K562 (cell line): ENCODE measurements at regions of chr19 and their contacts with region 1.

Region 1: DNA sequence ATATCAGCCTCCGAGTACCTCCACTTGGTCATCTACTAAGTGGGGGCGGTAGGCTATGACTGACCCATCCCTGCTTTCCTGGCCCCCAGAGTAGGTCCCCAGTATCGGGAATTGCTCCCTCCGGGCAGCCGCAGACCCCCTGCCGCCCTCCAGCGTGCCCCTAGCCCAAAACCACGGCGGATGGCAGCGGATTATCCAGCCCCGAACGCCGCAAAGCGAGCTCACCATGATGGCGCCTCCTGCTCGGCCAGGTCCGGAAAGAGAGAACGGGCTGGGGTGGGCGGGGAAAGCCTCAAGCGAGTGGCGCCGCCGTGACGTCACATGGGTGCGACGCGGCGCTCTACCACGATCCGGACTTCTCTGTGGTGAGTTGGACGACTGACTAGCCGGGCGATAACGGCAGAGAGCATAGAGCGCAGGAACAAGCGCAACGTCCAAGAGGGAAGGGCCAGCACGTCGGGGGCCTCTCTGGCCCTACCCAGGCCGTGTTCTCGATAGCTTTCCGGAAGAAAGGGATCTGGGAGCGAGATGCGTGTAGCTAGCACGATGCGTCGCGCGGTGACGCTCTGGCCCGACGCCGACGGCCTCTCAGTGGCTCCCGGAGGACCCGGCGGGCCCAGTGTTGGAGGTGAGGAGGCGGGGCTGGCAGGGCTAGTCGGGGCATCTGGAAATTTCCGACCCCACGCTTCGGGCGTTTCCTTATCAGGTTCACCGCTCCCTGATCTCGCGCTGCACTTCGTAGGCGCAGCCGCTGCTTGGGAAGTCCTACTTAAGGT is at the starts of genes RPL18 and SPHK2:
- DNase-seq: peak; percentile 91 to 99 (median 94)
- ATAC-seq: peak; percentile 84
- H3K4me3 ChIP-seq: peak within 1 kb of the TSS; percentile 64
- H3K27ac ChIP-seq: peak within 1 kb of the TSS; percentile 78
- H3K4me1 ChIP-seq: peaks cover 36 to 58% of the 10 kb centered on the region in 2 experiments; a peak in 4 of 5 replicates
- H3K27me3 ChIP-seq: no peaks in the 10 kb centered on the region
- CTCF ChIP-seq: peak in 1 of 3 experiments; percentile 2; a peak in 1 of 6 replicates
- EP300 ChIP-seq: peak; percentile 69
- POLR2A ChIP-seq: peak; percentile 99
- RAD21 ChIP-seq: no peak; a peak in 1 of 4 replicates
- polyA plus RNA-seq, gene RPL18: 312 to 402 TPM
- polyA plus RNA-seq, gene SPHK2: 0.10 to 0.17 TPM

Region 2: GRCh38 chr19:48547722-48548121 is 71.4 kb before region 1 on chr19:
- CTCF ChIA-PET with region 1: no interaction called
- POLR2A ChIA-PET with region 1: no interaction called
- in situ Hi-C with region 1: no loop called
- intact Hi-C with region 1: no loop called
- DNase-seq: no peak
- ATAC-seq: no peak
- H3K4me3 ChIP-seq: no peak overlapping the region
- H3K27ac ChIP-seq: no peak overlapping the region
- H3K4me1 ChIP-seq: peaks cover 0 to 28% of the 10 kb centered on the region in 2 experiments; a peak in 2 of 5 replicates
- H3K27me3 ChIP-seq: peaks cover 0 to 17% of the 10 kb centered on the region in 2 experiments; a peak in 3 of 5 replicates
- CTCF ChIP-seq: no peak
- EP300 ChIP-seq: no peak
- POLR2A ChIP-seq: no peak
- RAD21 ChIP-seq: no peak

Region 3: GRCh38 chr19:48578891-48579290 is 40.2 kb before region 1 on chr19:
- CTCF ChIA-PET with region 1: no interaction called
- POLR2A ChIA-PET with region 1: no interaction called
- in situ Hi-C with region 1: no loop called
- intact Hi-C with region 1: no loop called
- DNase-seq: no peak
- ATAC-seq: no peak
- H3K4me3 ChIP-seq: no peak overlapping the region
- H3K27ac ChIP-seq: no peak overlapping the region
- H3K4me1 ChIP-seq: peaks cover 7 to 8% of the 10 kb centered on the region in 2 experiments; a peak in 3 of 5 replicates
- H3K27me3 ChIP-seq: no peaks in the 10 kb centered on the region
- CTCF ChIP-seq: no peak
- EP300 ChIP-seq: no peak
- POLR2A ChIP-seq: no peak
- RAD21 ChIP-seq: no peak

Region 4: GRCh38 chr19:48608798-48609263 is 10.3 kb before region 1 on chr19:
- CTCF ChIA-PET with region 1: no interaction called
- POLR2A ChIA-PET with region 1: interaction called, 85 read pairs
- in situ Hi-C with region 1: no loop called
- intact Hi-C with region 1: no loop called
- DNase-seq: peak; percentile 67 to 73 (median 69)
- ATAC-seq: peak; percentile 86
- H3K4me3 ChIP-seq: no peak overlapping the region
- H3K27ac ChIP-seq: no peak overlapping the region
- H3K4me1 ChIP-seq: peaks cover 0 to 36% of the 10 kb centered on the region in 2 experiments; a peak in 3 of 5 replicates
- H3K27me3 ChIP-seq: no peaks in the 10 kb centered on the region
- CTCF ChIP-seq: peak; percentile 79 to 87 (median 81)
- EP300 ChIP-seq: no peak
- POLR2A ChIP-seq: no peak
- RAD21 ChIP-seq: peak; percentile 56 to 73

Region 5: GRCh38 chr19:48630296-48631063 is 11.4 kb after region 1 on chr19:
- CTCF ChIA-PET with region 1: no interaction called
- POLR2A ChIA-PET with region 1: interaction called, 18 read pairs
- in situ Hi-C with region 1: no loop called
- intact Hi-C with region 1: no loop called
- DNase-seq: no peak
- ATAC-seq: no peak
- H3K4me3 ChIP-seq: no peak overlapping the region
- H3K27ac ChIP-seq: no peak overlapping the region
- H3K4me1 ChIP-seq: peaks cover 27 to 79% of the 10 kb centered on the region in 2 experiments
- H3K27me3 ChIP-seq: no peaks in the 10 kb centered on the region
- CTCF ChIP-seq: no peak
- EP300 ChIP-seq: no peak
- POLR2A ChIP-seq: no peak; the same call in 1 of the 2 replicates
- RAD21 ChIP-seq: no peak

Region 6: GRCh38 chr19:48637170-48637947 is 18.3 kb after region 1 on chr19 and contains the start of gene DBP:
- CTCF ChIA-PET with region 1: no interaction called
- POLR2A ChIA-PET with region 1: interaction called, 18 read pairs
- in situ Hi-C with region 1: no loop called
- intact Hi-C with region 1: loop called (anchors 1 kb)
- DNase-seq: peak; percentile 81 to 99 (median 90)
- ATAC-seq: peak; percentile 78
- H3K4me3 ChIP-seq: peak within 1 kb of the TSS; percentile 51
- H3K27ac ChIP-seq: peak within 1 kb of the TSS; percentile 91
- H3K4me1 ChIP-seq: peaks cover 48 to 74% of the 10 kb centered on the region in 2 experiments
- H3K27me3 ChIP-seq: no peaks in the 10 kb centered on the region
- CTCF ChIP-seq: no peak; a peak in 1 of 6 replicates
- EP300 ChIP-seq: no peak
- POLR2A ChIP-seq: no peak
- RAD21 ChIP-seq: no peak
- polyA plus RNA-seq, gene DBP: 0.25 to 0.64 TPM

Region 7: DNA sequence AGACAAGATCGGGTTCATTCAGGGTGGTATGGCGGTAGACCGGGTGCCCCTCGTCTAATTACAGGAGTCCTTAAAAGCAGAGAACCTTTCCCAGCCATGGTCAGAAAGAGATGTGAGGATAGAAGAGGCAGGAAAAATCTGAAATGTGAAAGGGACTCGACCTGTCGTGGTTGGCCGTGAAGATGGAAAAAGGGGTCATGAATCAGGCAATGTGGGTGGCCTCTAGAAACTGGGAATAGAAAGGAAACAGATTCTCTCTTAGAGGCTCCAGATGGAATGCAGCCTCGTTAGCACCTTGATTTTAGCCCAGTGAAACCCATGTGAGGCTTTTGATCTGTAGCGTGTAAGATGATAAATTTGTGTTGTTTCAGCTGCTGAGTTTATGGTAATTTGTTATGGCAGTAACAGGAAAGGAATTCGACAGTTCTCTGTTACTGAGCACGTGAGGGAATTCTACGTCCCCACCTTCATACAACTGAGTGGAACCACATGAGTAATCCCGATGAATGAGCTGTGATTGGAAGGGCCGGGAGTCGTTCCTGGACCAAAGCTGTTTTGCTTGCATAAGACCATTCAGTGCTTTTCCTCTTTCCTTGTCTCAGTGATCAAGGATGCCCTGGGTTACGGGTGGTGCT is 37.9 kb after region 1 on chr19:
- CTCF ChIA-PET with region 1: no interaction called
- POLR2A ChIA-PET with region 1: no interaction called
- in situ Hi-C with region 1: no loop called
- intact Hi-C with region 1: no loop called
- DNase-seq: no peak
- ATAC-seq: no peak
- H3K4me3 ChIP-seq: no peak overlapping the region
- H3K27ac ChIP-seq: no peak overlapping the region
- H3K4me1 ChIP-seq: peaks cover 14 to 40% of the 10 kb centered on the region in 2 experiments
- H3K27me3 ChIP-seq: no peaks in the 10 kb centered on the region
- CTCF ChIP-seq: no peak
- EP300 ChIP-seq: no peak
- POLR2A ChIP-seq: no peak
- RAD21 ChIP-seq: no peak